HCT116 (cell line): ENCODE measurements at regions of chr15 and their contacts with region 1.

Region 1: DNA sequence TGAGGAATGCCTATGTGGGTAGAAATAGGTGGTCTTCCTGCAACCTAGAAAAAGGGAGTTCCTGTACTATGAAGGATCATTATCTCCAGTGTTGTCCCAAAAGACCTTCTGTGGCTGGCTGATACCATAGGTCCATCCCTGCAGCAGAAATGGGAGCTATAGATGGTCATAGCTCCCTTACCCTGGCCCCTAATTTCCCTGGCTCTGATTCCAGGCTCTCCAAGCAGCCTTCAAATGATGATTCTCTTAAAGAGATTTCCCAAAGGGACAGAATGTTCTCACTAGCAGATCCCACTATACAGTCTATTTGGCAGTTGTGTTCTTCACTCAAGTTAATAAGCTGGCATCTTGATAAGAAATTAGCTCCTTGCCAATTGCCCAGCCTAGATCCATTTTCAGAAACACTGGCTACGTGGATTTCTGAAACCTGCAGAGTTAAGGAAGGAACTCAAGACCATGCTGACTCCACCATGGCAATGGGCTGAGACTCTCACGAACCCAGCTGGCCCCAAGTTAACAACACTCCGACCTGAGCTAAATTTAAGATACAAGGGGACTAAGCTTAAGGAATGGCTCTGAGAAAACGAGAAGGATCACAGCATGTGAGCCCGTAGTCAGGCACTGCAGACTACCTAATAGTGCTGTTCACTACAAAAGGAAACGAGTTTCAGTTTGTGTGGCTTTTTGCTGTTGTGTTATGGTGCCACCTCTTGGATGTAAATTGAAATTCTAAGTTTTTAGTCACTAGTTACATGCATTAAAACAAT is 11.4 kb downstream of the C15orf40 start:
- DNase-seq: no peak
- ATAC-seq: peak; percentile 79
- H3K4me3 ChIP-seq: no peak overlapping the region
- H3K27ac ChIP-seq: no peak overlapping the region
- H3K4me1 ChIP-seq: peaks cover 0 to 3% of the 10 kb centered on the region in 2 experiments; a peak in 1 of 4 replicates
- H3K27me3 ChIP-seq: no peaks in the 10 kb centered on the region
- CTCF ChIP-seq: peak; percentile 39 to 78 (median 64); a peak in 5 of 6 replicates
- POLR2A ChIP-seq: no peak
- RAD21 ChIP-seq: peak; percentile 87

Region 2: GRCh38 chr15:82530606-82531379 is 469.3 kb before region 1 on chr15:
- CTCF ChIA-PET with region 1: interaction called, 5 read pairs
- POLR2A ChIA-PET with region 1: no interaction called
- RAD21 ChIA-PET with region 1: no interaction called
- intact Hi-C with region 1: loop called (anchors 10 kb)
- DNase-seq: peak; percentile 73
- ATAC-seq: peak; percentile 86
- H3K4me3 ChIP-seq: peak overlapping the region; percentile 30 to 47
- H3K27ac ChIP-seq: peak overlapping the region; percentile 41
- H3K4me1 ChIP-seq: peaks cover 0 to 7% of the 10 kb centered on the region in 2 experiments; a peak in 2 of 4 replicates
- H3K27me3 ChIP-seq: no peaks in the 10 kb centered on the region
- CTCF ChIP-seq: peak; percentile 70 to 97 (median 79)
- POLR2A ChIP-seq: no peak
- RAD21 ChIP-seq: no peak; the same call in 1 of the 2 replicates

Region 3: GRCh38 chr15:82799183-82799842 is 200.8 kb before region 1 on chr15:
- CTCF ChIA-PET with region 1: no interaction called
- POLR2A ChIA-PET with region 1: no interaction called
- RAD21 ChIA-PET with region 1: no interaction called
- intact Hi-C with region 1: no loop called
- DNase-seq: no peak
- ATAC-seq: no peak
- H3K4me3 ChIP-seq: no peak overlapping the region
- H3K27ac ChIP-seq: no peak overlapping the region
- H3K4me1 ChIP-seq: no peaks in the 10 kb centered on the region
- H3K27me3 ChIP-seq: peaks cover 5% of the 10 kb centered on the region; the same call in 1 of the 2 replicates
- CTCF ChIP-seq: no peak
- POLR2A ChIP-seq: no peak
- RAD21 ChIP-seq: no peak

Region 4: GRCh38 chr15:83365370-83365938 is 365.4 kb after region 1 on chr15:
- CTCF ChIA-PET with region 1: no interaction called
- POLR2A ChIA-PET with region 1: no interaction called
- RAD21 ChIA-PET with region 1: no interaction called
- intact Hi-C with region 1: no loop called
- DNase-seq: peak; percentile 16
- ATAC-seq: peak; percentile 94
- H3K4me3 ChIP-seq: peak overlapping the region; percentile 44 to 49
- H3K27ac ChIP-seq: no peak overlapping the region
- H3K4me1 ChIP-seq: peaks cover 2 to 12% of the 10 kb centered on the region in 2 experiments; a peak in 2 of 4 replicates
- H3K27me3 ChIP-seq: peaks cover 7% of the 10 kb centered on the region; the same call in 1 of the 2 replicates
- CTCF ChIP-seq: no peak
- POLR2A ChIP-seq: no peak
- RAD21 ChIP-seq: no peak